ENCODE measurements at regions of chr2 and their contacts with region 1.

Region 1: GRCh38 chr2:215435809-215436704 is at the start of gene FN1:
- DNase-seq: peak in 1 of 2 experiments; percentile 74
- H3K4me3 ChIP-seq: peak within 1 kb of the TSS; percentile 70
- H3K27ac ChIP-seq: no peak within 1 kb of the TSS
- H3K4me1 ChIP-seq: peaks cover 15% of the 10 kb centered on the region
- H3K27me3 ChIP-seq: no peaks in the 10 kb centered on the region
- CTCF ChIP-seq: no peak
- total RNA-seq, gene FN1: 39.4 and 42.5 TPM in 2 replicates

Region 2: DNA sequence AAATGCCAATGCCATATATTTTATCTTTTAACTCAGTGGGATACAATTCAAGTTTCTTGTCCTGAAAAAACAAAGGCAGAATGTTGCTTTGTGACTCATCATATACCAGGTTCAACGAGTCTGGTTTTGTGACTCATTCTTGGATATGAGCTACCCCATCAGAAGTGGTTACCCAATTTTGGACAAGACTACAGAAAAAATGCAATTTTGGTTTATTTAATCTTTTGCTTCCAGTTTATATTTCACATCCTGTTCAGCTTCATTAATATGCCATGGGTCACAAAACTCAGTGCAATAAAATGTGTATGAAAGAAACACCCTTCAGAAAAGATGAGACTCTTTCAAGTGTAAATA is 25.1 kb before region 1 on chr2:
- CTCF ChIA-PET with region 1: no interaction called
- POLR2A ChIA-PET with region 1: no interaction called
- intact Hi-C with region 1: loop called (anchors 2 kb)
- DNase-seq: peak; percentile 27 to 98
- H3K4me3 ChIP-seq: peak overlapping the region; percentile 2; the same call in 1 of the 2 replicates
- H3K27ac ChIP-seq: peak overlapping the region; percentile 82
- H3K4me1 ChIP-seq: peaks cover 38% of the 10 kb centered on the region
- H3K27me3 ChIP-seq: no peaks in the 10 kb centered on the region
- CTCF ChIP-seq: no peak

Region 3: GRCh38 chr2:215693193-215693998 is 257.3 kb after region 1 on chr2:
- CTCF ChIA-PET with region 1: no interaction called
- POLR2A ChIA-PET with region 1: interaction called, 11 read pairs
- intact Hi-C with region 1: no loop called
- DNase-seq: peak in 1 of 2 experiments; percentile 88
- H3K4me3 ChIP-seq: 0 out of 2 replicates have a peak overlapping the region, but pooled peaks have one; percentile 12
- H3K27ac ChIP-seq: peak overlapping the region; percentile 53
- H3K4me1 ChIP-seq: peaks cover 31% of the 10 kb centered on the region
- H3K27me3 ChIP-seq: no peaks in the 10 kb centered on the region
- CTCF ChIP-seq: no peak

Region 4: DNA sequence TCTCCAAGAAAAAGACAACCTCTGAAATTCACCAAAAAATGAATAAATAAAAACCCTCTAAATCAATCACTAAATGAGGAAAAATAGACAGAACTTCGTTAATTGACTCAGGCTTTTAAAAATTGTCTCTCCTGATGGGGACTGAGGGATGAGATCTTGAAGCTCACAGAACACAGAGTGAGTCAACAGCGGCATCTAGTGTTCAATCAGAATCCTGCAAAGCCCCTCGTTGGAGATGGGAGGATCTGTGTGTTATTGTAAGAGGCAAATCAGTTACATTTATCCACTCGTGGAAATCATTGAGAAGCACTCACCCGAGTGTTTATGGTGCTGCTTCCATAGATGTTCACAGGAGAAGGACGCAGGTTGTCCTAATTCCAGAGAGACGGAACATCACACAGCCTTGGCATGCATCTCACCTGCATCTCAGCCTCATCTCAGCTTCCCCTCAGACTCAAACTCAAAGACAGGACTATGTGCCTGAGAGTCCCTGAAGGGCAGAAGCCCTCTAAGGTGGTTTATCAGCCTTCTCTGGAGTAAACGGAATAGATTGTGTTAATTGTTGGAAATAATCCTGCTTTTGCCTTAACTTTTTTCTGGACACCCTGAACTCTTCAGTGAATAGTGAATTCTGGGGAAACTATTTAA is 495.3 kb after region 1 on chr2:
- CTCF ChIA-PET with region 1: interaction called, 18 read pairs
- POLR2A ChIA-PET with region 1: no interaction called
- intact Hi-C with region 1: no loop called
- DNase-seq: peak; percentile 60 to 74
- H3K4me3 ChIP-seq: peak overlapping the region; percentile 46; the same call in 1 of the 2 replicates
- H3K27ac ChIP-seq: peak overlapping the region; percentile 82
- H3K4me1 ChIP-seq: peaks cover 30% of the 10 kb centered on the region
- H3K27me3 ChIP-seq: no peaks in the 10 kb centered on the region
- CTCF ChIP-seq: peak; percentile 100

Measured in PC-9 (cell line).